ENCODE measurements at regions of chr1 and their contacts with region 1.

Region 1: GRCh38 chr1:119675349-119676345 is 27.6 kb upstream of the ZNF697 start:
- DNase-seq: peak; percentile 73
- ATAC-seq: no peak
- H3K4me3 ChIP-seq: peak overlapping the region in 2 of 5 experiments; percentile 17 to 49
- H3K4me3 Mint-ChIP-seq: peak overlapping the region; percentile 73
- H3K27ac ChIP-seq: no peak overlapping the region
- H3K27ac Mint-ChIP-seq: no peak overlapping the region
- H3K4me1 ChIP-seq: peaks cover 6 to 11% of the 10 kb centered on the region in 2 donors
- H3K4me1 Mint-ChIP-seq: peaks cover 8% of the 10 kb centered on the region
- H3K27me3 ChIP-seq: peaks cover 0 to 12% (median 6%) of the 10 kb centered on the region in 4 experiments
- H3K27me3 Mint-ChIP-seq: peaks cover 32% of the 10 kb centered on the region
- CTCF ChIP-seq: peak; percentile 81

Region 2: DNA sequence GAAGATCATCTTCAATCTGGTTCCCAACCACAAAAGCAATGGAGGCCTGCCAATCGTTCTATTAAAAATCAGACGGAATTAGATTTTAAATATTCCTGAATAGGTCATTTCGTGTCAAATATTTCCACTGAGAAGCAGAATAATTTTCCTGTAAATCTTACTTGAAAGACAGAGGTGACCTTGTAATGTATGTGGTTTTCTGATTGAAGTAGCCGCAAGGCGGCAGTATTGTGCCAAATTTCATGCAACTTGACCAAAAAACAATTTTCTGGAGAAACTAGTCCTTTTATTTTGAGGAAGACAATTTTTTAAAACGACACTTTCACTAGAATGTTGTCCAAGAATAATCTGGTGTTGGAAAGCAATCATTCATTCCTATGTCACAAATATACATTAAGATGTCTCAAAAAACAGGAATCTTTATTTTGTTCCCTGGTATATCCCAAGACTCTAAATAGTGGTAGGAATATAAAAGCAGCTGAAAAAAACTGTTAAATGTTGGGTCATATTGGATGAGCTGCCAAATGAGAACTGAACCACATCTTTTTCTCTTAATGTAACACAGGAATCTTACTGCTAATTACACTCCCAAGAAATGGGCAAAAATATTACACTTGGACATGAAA is 1524.2 kb before region 1 on chr1:
- CTCF ChIA-PET with region 1: no interaction called
- POLR2A ChIA-PET with region 1: no interaction called
- intact Hi-C with region 1: loop called (anchors 10 kb)
- DNase-seq: peak; percentile 43
- ATAC-seq: no peak
- H3K4me3 ChIP-seq: no peak overlapping the region
- H3K4me3 Mint-ChIP-seq: no peak overlapping the region
- H3K27ac ChIP-seq: no peak overlapping the region
- H3K27ac Mint-ChIP-seq: no peak overlapping the region
- H3K4me1 ChIP-seq: no peaks in the 10 kb centered on the region
- H3K4me1 Mint-ChIP-seq: no peaks in the 10 kb centered on the region
- H3K27me3 ChIP-seq: no peaks in the 10 kb centered on the region
- H3K27me3 Mint-ChIP-seq: no peaks in the 10 kb centered on the region
- CTCF ChIP-seq: peak; percentile 77

Region 3: GRCh38 chr1:119275145-119276134 is 400.2 kb before region 1 on chr1:
- CTCF ChIA-PET with region 1: interaction called, 5 read pairs
- POLR2A ChIA-PET with region 1: no interaction called
- intact Hi-C with region 1: loop called (anchors 10 kb)
- DNase-seq: peak; percentile 19
- ATAC-seq: no peak
- H3K4me3 ChIP-seq: no peak overlapping the region
- H3K4me3 Mint-ChIP-seq: no peak overlapping the region
- H3K27ac ChIP-seq: no peak overlapping the region
- H3K27ac Mint-ChIP-seq: no peak overlapping the region
- H3K4me1 ChIP-seq: no peaks in the 10 kb centered on the region
- H3K4me1 Mint-ChIP-seq: no peaks in the 10 kb centered on the region
- H3K27me3 ChIP-seq: no peaks in the 10 kb centered on the region
- H3K27me3 Mint-ChIP-seq: peaks cover 4% of the 10 kb centered on the region
- CTCF ChIP-seq: peak; percentile 69

Region 4: GRCh38 chr1:119549719-119550132 is 125.9 kb before region 1 on chr1:
- CTCF ChIA-PET with region 1: interaction called, 25 read pairs
- POLR2A ChIA-PET with region 1: no interaction called
- intact Hi-C with region 1: no loop called
- DNase-seq: peak; percentile 53
- ATAC-seq: peak; percentile 33
- H3K4me3 ChIP-seq: no peak overlapping the region
- H3K4me3 Mint-ChIP-seq: no peak overlapping the region
- H3K27ac ChIP-seq: no peak overlapping the region
- H3K27ac Mint-ChIP-seq: no peak overlapping the region
- H3K4me1 ChIP-seq: peaks cover 0 to 5% of the 10 kb centered on the region in 2 donors
- H3K4me1 Mint-ChIP-seq: peaks cover 3% of the 10 kb centered on the region
- H3K27me3 ChIP-seq: peaks cover 0 to 3% (median 0%) of the 10 kb centered on the region in 4 experiments
- H3K27me3 Mint-ChIP-seq: peaks cover 4% of the 10 kb centered on the region
- CTCF ChIP-seq: peak; percentile 58

Region 5: GRCh38 chr1:119613769-119614720 is 61.6 kb before region 1 on chr1:
- CTCF ChIA-PET with region 1: interaction called, 24 read pairs
- POLR2A ChIA-PET with region 1: no interaction called
- intact Hi-C with region 1: no loop called
- DNase-seq: peak; percentile 46
- ATAC-seq: no peak
- H3K4me3 ChIP-seq: no peak overlapping the region
- H3K4me3 Mint-ChIP-seq: no peak overlapping the region
- H3K27ac ChIP-seq: no peak overlapping the region
- H3K27ac Mint-ChIP-seq: no peak overlapping the region
- H3K4me1 ChIP-seq: no peaks in the 10 kb centered on the region
- H3K4me1 Mint-ChIP-seq: no peaks in the 10 kb centered on the region
- H3K27me3 ChIP-seq: peaks cover 0 to 4% (median 0%) of the 10 kb centered on the region in 4 experiments
- H3K27me3 Mint-ChIP-seq: peaks cover 8% of the 10 kb centered on the region
- CTCF ChIP-seq: peak; percentile 49

Region 6: GRCh38 chr1:119743781-119744597 is 68.3 kb after region 1 on chr1:
- CTCF ChIA-PET with region 1: interaction called, 3 read pairs
- POLR2A ChIA-PET with region 1: no interaction called
- intact Hi-C with region 1: loop called (anchors 1 kb)
- DNase-seq: peak; percentile 55
- ATAC-seq: peak; percentile 57
- H3K4me3 ChIP-seq: no peak overlapping the region
- H3K4me3 Mint-ChIP-seq: no peak overlapping the region
- H3K27ac ChIP-seq: no peak overlapping the region
- H3K27ac Mint-ChIP-seq: no peak overlapping the region
- H3K4me1 ChIP-seq: peaks cover 0 to 3% of the 10 kb centered on the region in 2 donors
- H3K4me1 Mint-ChIP-seq: peaks cover 4% of the 10 kb centered on the region
- H3K27me3 ChIP-seq: no peaks in the 10 kb centered on the region
- H3K27me3 Mint-ChIP-seq: peaks cover 6% of the 10 kb centered on the region
- CTCF ChIP-seq: peak; percentile 87

Measured in B cell (primary cell).